Lower leg skin (tissue), 4 donors: ENCODE measurements at regions of chr12 and their contacts with region 1.

Region 1: GRCh38 chr12:132614861-132615578 is 3.6 kb upstream of the P2RX2 start:
- DNase-seq: peak; percentile 70 to 96
- H3K4me3 ChIP-seq: no peak overlapping the region
- CTCF ChIP-seq: peak in 1 of 3 donors; percentile 26
- POLR2A ChIP-seq: no peak

Region 2: DNA sequence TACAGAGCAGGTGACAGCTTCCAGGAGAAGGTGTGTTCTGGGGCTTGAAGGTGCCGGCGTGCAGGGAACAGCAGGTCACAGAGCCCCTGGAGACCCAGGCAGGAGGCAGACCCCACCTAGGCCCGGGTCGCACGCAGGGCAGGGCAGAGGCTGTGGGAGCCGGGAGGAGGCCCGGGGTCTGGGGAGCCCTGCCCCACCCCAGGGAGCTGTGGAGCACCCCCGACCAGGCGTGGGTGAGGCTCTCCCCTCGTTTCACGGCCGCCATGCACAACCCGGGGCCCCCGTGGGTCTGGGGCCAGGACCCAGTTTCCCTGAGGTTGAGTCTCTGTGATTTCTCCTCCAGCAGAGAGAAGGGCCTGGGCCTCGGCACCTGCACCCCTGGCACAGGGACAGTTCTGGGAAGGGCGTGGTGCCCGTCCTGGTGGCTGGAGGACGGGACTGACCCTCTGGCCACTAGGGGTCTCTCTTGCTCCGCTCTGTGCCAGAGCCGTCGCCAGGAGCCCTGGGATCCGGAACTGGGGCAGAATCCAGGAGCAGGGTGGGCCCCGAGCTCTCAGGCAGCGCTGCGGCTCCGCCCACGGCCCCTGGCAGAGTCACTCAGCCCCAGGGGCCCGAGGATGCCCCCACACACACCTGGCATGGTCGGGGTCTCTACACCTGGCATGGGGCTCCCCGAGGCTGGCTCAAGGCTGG is 200.2 kb before region 1 on chr12:
- intact Hi-C with region 1: loop called (anchors 10 kb)
- DNase-seq: peak in 1 of 2 donors; percentile 56
- H3K4me3 ChIP-seq: no peak overlapping the region
- CTCF ChIP-seq: peak in 1 of 3 donors; percentile 70
- POLR2A ChIP-seq: no peak

Region 3: GRCh38 chr12:132470978-132471857 is 143.8 kb before region 1 on chr12:
- intact Hi-C with region 1: no loop called
- DNase-seq: no peak
- H3K4me3 ChIP-seq: no peak overlapping the region
- CTCF ChIP-seq: no peak
- POLR2A ChIP-seq: no peak